ENCODE measurements at regions of chr12 and their contacts with region 1.

Region 1: GRCh38 chr12:15882118-15882971 is at the start of gene STRAP:
- DNase-seq: peak; percentile 98
- ATAC-seq: peak; percentile 93
- H3K4me3 ChIP-seq: peak within 1 kb of the TSS; percentile 60 to 97 (median 92)
- H3K4me3 Mint-ChIP-seq: peak within 1 kb of the TSS; percentile 100
- H3K27ac ChIP-seq: peak within 1 kb of the TSS; percentile 98 to 99
- H3K27ac Mint-ChIP-seq: peak within 1 kb of the TSS; percentile 99
- H3K4me1 ChIP-seq: peaks cover 14 to 19% of the 10 kb centered on the region in 2 donors
- H3K4me1 Mint-ChIP-seq: peaks cover 51% of the 10 kb centered on the region
- H3K27me3 ChIP-seq: no peaks in the 10 kb centered on the region
- H3K27me3 Mint-ChIP-seq: no peaks in the 10 kb centered on the region
- CTCF ChIP-seq: no peak
- total RNA-seq, gene STRAP: 44.7 and 49.0 TPM in 2 replicates

Region 2: DNA sequence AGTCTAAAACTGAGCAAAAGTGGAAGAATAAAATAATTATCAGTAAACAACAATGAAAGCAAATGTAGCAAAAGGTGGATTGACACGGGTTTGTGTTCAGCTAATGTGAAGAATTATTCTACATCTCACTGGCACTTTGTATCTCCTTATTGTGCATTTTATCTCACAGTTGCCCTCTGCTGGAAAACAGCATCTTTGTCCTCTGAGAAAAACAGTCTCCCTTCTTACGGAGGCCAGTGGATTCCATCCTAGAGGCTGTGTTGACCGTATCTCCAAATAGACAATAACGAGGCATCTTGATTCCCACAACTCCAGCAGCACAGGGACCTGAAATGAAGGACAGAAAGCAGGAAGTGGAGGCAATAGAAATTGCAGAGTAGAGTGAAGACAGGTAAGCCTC is 1263.4 kb before region 1 on chr12:
- CTCF ChIA-PET with region 1: no interaction called
- POLR2A ChIA-PET with region 1: no interaction called
- intact Hi-C with region 1: loop called (anchors 10 kb)
- DNase-seq: peak; percentile 32
- ATAC-seq: no peak
- H3K4me3 ChIP-seq: no peak overlapping the region
- H3K4me3 Mint-ChIP-seq: no peak overlapping the region
- H3K27ac ChIP-seq: no peak overlapping the region
- H3K27ac Mint-ChIP-seq: peak overlapping the region; percentile 17
- H3K4me1 ChIP-seq: peaks cover 34 to 40% of the 10 kb centered on the region in 2 donors
- H3K4me1 Mint-ChIP-seq: peaks cover 42% of the 10 kb centered on the region
- H3K27me3 ChIP-seq: no peaks in the 10 kb centered on the region
- H3K27me3 Mint-ChIP-seq: no peaks in the 10 kb centered on the region
- CTCF ChIP-seq: peak; percentile 23

Region 3: GRCh38 chr12:15546102-15546701 is 336.1 kb before region 1 on chr12:
- CTCF ChIA-PET with region 1: interaction called, 5 read pairs
- POLR2A ChIA-PET with region 1: no interaction called
- intact Hi-C with region 1: loop called (anchors 5 kb)
- DNase-seq: peak; percentile 74
- ATAC-seq: peak; percentile 80
- H3K4me3 ChIP-seq: peak overlapping the region; percentile 33 to 74 (median 51)
- H3K4me3 Mint-ChIP-seq: peak overlapping the region; percentile 84
- H3K27ac ChIP-seq: peak overlapping the region; percentile 89 to 99
- H3K27ac Mint-ChIP-seq: peak overlapping the region; percentile 100
- H3K4me1 ChIP-seq: peaks cover 34 to 44% of the 10 kb centered on the region in 2 donors
- H3K4me1 Mint-ChIP-seq: peaks cover 59% of the 10 kb centered on the region
- H3K27me3 ChIP-seq: no peaks in the 10 kb centered on the region
- H3K27me3 Mint-ChIP-seq: no peaks in the 10 kb centered on the region
- CTCF ChIP-seq: no peak

Region 4: DNA sequence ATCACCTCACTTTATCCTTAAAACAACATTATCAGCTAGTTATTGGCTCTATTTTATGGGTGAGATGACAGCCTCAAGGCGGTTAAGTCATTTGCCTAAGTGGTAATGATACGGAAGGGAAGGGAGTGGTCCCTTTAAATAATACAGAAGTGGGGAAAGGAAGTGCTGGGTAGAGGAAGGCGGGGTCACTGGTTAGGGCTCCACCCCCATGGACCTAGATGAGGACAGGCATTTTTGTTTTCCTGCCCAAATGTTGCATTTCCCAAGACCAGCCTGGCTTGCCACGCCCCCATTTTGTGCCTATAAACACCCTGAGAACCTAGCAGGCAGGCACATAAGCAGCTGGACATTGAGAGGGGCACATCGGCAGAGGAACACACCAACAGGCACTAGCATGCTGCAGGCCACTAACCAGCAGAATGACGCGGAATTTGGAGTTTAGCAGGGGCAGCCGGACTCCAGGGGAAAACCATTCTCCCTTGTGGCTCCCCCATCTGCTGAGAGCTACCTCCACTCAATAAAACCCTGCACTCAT is 194.1 kb before region 1 on chr12:
- CTCF ChIA-PET with region 1: no interaction called
- POLR2A ChIA-PET with region 1: no interaction called
- intact Hi-C with region 1: no loop called
- DNase-seq: peak; percentile 27
- ATAC-seq: no peak
- H3K4me3 ChIP-seq: no peak overlapping the region
- H3K4me3 Mint-ChIP-seq: peak overlapping the region; percentile 17
- H3K27ac ChIP-seq: no peak overlapping the region
- H3K27ac Mint-ChIP-seq: no peak overlapping the region
- H3K4me1 ChIP-seq: peaks cover 0 to 6% of the 10 kb centered on the region in 2 donors
- H3K4me1 Mint-ChIP-seq: peaks cover 12% of the 10 kb centered on the region
- H3K27me3 ChIP-seq: no peaks in the 10 kb centered on the region
- H3K27me3 Mint-ChIP-seq: peaks cover 7% of the 10 kb centered on the region
- CTCF ChIP-seq: no peak

Region 5: GRCh38 chr12:15789220-15790171 is 92.8 kb before region 1 on chr12 and contains the start of gene EPS8:
- CTCF ChIA-PET with region 1: no interaction called
- POLR2A ChIA-PET with region 1: no interaction called
- intact Hi-C with region 1: loop called (anchors 1 kb)
- DNase-seq: peak; percentile 93
- ATAC-seq: peak; percentile 95
- H3K4me3 ChIP-seq: peak within 1 kb of the TSS; percentile 47 to 86 (median 72)
- H3K4me3 Mint-ChIP-seq: peak within 1 kb of the TSS; percentile 87
- H3K27ac ChIP-seq: peak within 1 kb of the TSS in 1 of 2 donors; percentile 13
- H3K27ac Mint-ChIP-seq: peak within 1 kb of the TSS; percentile 64
- H3K4me1 ChIP-seq: peaks cover 15 to 16% of the 10 kb centered on the region in 2 donors
- H3K4me1 Mint-ChIP-seq: peaks cover 15% of the 10 kb centered on the region
- H3K27me3 ChIP-seq: peaks cover 0 to 51% (median 37%) of the 10 kb centered on the region in 4 experiments
- H3K27me3 Mint-ChIP-seq: peaks cover 53% of the 10 kb centered on the region
- CTCF ChIP-seq: no peak
- total RNA-seq, gene EPS8: 0.78 and 0.96 TPM in 2 replicates

Region 6: GRCh38 chr12:15863984-15864383 is 18.4 kb before region 1 on chr12:
- CTCF ChIA-PET with region 1: interaction called, 3 read pairs
- POLR2A ChIA-PET with region 1: no interaction called
- intact Hi-C with region 1: loop called (anchors 1 kb)
- DNase-seq: peak; percentile 55
- ATAC-seq: peak; percentile 56
- H3K4me3 ChIP-seq: peak overlapping the region in 1 of 5 experiments; percentile 44
- H3K4me3 Mint-ChIP-seq: peak overlapping the region; percentile 3
- H3K27ac ChIP-seq: no peak overlapping the region
- H3K27ac Mint-ChIP-seq: no peak overlapping the region
- H3K4me1 ChIP-seq: peaks cover 0 to 4% of the 10 kb centered on the region in 2 donors
- H3K4me1 Mint-ChIP-seq: peaks cover 7% of the 10 kb centered on the region
- H3K27me3 ChIP-seq: no peaks in the 10 kb centered on the region
- H3K27me3 Mint-ChIP-seq: no peaks in the 10 kb centered on the region
- CTCF ChIP-seq: no peak

Region 7: DNA sequence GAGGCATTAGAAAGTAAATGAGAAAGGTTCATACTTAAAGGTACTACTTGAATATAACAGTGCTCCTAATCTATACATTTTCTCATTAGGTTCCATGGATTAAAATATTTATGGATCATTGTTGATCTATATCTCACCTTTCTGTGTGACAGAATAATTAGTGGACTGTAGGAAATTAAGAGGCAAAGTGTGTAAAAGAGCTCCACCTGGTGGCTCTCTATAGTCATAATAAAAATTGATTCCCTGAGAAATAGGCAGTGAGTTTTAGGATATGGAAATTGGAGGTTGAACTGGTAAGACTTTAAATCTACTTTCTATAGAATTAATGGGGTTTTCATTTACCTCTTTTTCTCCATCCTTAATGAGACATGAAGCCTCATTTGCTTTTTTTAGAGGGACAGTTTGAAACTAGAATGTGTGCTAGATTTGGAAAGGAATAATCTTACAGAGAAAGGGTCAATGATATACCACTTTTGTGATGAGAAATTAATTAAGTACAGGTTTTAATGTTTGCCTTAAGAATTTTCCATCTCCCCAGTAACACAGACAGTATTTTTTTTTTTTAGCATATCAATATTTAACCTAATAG is 17.0 kb after region 1 on chr12:
- CTCF ChIA-PET with region 1: interaction called, 28 read pairs
- POLR2A ChIA-PET with region 1: interaction called, 10 read pairs
- intact Hi-C with region 1: loop called (anchors 2 kb)
- DNase-seq: peak; percentile 59
- ATAC-seq: peak; percentile 36
- H3K4me3 ChIP-seq: no peak overlapping the region
- H3K4me3 Mint-ChIP-seq: no peak overlapping the region
- H3K27ac ChIP-seq: peak overlapping the region in 1 of 2 donors; percentile 45
- H3K27ac Mint-ChIP-seq: peak overlapping the region; percentile 34
- H3K4me1 ChIP-seq: no peaks in the 10 kb centered on the region
- H3K4me1 Mint-ChIP-seq: peaks cover 3% of the 10 kb centered on the region
- H3K27me3 ChIP-seq: no peaks in the 10 kb centered on the region
- H3K27me3 Mint-ChIP-seq: no peaks in the 10 kb centered on the region
- CTCF ChIP-seq: peak; percentile 95

Region 8: DNA sequence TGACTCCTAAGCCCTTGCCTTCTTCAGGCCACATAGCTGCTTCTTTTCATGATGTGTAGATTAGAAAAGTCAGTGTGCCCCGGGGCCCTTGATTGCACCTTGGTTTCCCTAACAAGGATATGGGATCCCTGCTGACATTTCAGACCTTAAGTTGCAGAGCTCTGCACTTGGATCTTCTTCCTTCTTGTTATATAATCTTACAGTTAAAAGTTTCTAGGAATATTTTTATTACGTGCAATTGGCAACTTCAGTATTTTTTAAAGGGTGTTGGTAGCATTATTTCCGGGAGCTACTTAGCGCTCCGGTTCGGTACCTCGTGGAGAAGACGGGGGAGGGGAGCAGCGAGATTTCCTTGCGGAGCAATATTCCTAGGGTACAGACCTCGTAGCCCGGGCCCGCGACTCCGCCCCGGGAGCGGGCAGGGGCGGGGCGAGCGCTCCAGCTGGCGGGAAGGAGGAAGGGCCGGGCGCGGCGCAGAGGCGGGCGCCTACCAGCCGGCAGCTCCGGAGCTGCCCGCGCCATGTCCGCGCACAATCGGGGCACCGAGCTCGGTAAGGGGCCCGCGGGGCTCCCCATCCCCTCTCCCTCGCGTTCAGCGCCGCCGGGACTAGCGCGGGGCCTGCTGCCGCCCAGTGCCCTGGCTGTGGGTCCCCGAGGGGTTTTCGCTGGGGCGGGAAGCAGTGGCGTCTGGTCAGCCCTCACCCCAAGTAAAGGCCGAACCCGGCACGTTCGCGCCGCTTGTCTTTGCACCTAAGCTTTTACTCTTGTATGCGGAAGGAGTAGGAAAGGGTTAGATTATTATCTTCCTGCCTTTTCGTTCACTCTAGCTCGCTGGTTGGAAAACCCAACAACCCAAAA is 28.7 kb after region 1 on chr12 and contains the start of gene DERA:
- CTCF ChIA-PET with region 1: interaction called, 5 read pairs
- POLR2A ChIA-PET with region 1: no interaction called
- intact Hi-C with region 1: loop called (anchors 1 kb)
- DNase-seq: peak; percentile 75
- ATAC-seq: peak; percentile 95
- H3K4me3 ChIP-seq: peak within 1 kb of the TSS; percentile 74 to 98 (median 88)
- H3K4me3 Mint-ChIP-seq: peak within 1 kb of the TSS; percentile 93
- H3K27ac ChIP-seq: peak within 1 kb of the TSS; percentile 79 to 88
- H3K27ac Mint-ChIP-seq: peak within 1 kb of the TSS; percentile 92
- H3K4me1 ChIP-seq: peaks cover 6 to 10% of the 10 kb centered on the region in 2 donors
- H3K4me1 Mint-ChIP-seq: peaks cover 19% of the 10 kb centered on the region
- H3K27me3 ChIP-seq: no peaks in the 10 kb centered on the region
- H3K27me3 Mint-ChIP-seq: no peaks in the 10 kb centered on the region
- CTCF ChIP-seq: no peak
- total RNA-seq, gene DERA: 20.5 and 21.6 TPM in 2 replicates